Activated CD4-positive, alpha-beta memory T cell treated with anti-CD3 and anti-CD28 coated beads, Interleukin-2, amount 10 ng/mL, durations not matched to agents 7 days and 5 days (primary cell): ENCODE measurements at regions of chr17 and their contacts with region 1.

Region 1: GRCh38 chr17:42322382-42323267 is 34.3 kb downstream of the STAT5A start:
- DNase-seq: peak; percentile 95
- H3K4me3 Mint-ChIP-seq: no peak overlapping the region
- H3K27ac Mint-ChIP-seq: no peak overlapping the region
- H3K4me1 Mint-ChIP-seq: peaks cover 50% of the 10 kb centered on the region
- H3K27me3 Mint-ChIP-seq: no peaks in the 10 kb centered on the region

Region 2: DNA sequence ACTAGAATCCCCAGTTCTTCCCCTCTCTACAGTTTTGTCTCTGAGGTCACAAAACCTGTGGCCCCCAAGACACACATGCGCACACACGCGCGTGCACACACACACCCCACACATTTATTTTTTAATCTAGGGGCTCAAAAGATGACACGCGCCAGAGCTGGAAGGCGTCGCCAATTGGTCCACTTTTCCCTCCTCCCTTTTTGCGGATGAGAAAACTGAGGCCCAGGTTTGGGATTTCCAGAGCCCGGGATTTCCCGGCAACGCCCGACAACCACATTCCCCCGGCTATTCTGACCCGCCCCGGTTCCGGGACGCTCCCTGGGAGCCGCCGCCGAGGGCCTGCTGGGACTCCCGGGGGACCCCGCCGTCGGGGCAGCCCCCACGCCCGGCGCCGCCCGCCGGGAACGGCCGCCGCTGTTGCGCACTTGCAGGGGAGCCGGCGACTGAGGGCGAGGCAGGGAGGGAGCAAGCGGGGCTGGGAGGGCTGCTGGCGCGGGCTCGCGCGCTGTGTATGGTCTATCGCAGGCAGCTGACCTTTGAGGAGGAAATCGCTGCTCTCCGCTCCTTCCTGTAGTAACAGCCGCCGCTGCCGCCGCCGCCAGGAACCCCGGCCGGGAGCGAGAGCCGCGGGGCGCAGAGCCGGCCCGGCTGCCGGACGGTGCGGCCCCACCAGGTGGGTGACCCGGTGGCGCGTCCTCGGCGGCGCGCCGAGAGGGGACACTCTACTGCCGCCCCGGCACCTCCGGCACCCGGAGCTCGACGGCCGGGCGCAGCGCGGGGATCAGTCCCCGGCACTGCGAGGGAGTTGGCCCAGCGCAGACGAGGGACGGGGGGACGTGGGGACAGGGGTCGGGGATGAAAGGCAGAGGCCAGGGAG is 34.5 kb before region 1 on chr17 and contains the start of gene STAT5A:
- CTCF ChIA-PET with region 1: no interaction called
- POLR2A ChIA-PET with region 1: no interaction called
- DNase-seq: peak; percentile 86
- H3K4me3 Mint-ChIP-seq: peak within 1 kb of the TSS; percentile 89
- H3K27ac Mint-ChIP-seq: peak within 1 kb of the TSS; percentile 86
- H3K4me1 Mint-ChIP-seq: peaks cover 59% of the 10 kb centered on the region
- H3K27me3 Mint-ChIP-seq: no peaks in the 10 kb centered on the region
- total RNA-seq, gene STAT5A: 88.4 to 96.7 TPM

Region 3: DNA sequence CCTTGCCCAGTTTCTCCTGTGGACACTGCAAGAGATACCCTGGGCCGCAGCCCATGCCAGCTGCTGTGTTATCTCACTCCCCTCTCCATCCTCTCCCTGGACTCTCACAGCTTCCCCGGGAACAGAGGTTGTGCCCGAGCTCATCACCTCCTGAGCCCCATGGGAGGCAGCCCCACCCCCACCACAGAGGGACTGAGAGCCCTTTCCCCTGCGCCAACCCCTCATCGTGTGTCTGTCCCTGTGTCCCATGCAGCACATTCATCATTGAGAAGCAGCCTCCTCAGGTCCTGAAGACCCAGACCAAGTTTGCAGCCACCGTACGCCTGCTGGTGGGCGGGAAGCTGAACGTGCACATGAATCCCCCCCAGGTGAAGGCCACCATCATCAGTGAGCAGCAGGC is 21.6 kb before region 1 on chr17:
- CTCF ChIA-PET with region 1: no interaction called
- POLR2A ChIA-PET with region 1: no interaction called
- DNase-seq: no peak
- H3K4me3 Mint-ChIP-seq: no peak overlapping the region
- H3K27ac Mint-ChIP-seq: no peak overlapping the region
- H3K4me1 Mint-ChIP-seq: peaks cover 6% of the 10 kb centered on the region
- H3K27me3 Mint-ChIP-seq: no peaks in the 10 kb centered on the region

Region 4: GRCh38 chr17:42312285-42313130 is 10.1 kb before region 1 on chr17:
- CTCF ChIA-PET with region 1: interaction called, 43 read pairs
- POLR2A ChIA-PET with region 1: interaction called, 4 read pairs
- DNase-seq: peak; percentile 80
- H3K4me3 Mint-ChIP-seq: no peak overlapping the region
- H3K27ac Mint-ChIP-seq: peak overlapping the region; percentile 6
- H3K4me1 Mint-ChIP-seq: peaks cover 59% of the 10 kb centered on the region
- H3K27me3 Mint-ChIP-seq: no peaks in the 10 kb centered on the region